Activated CD4-positive, alpha-beta T cell treated with anti-CD3 and anti-CD28 coated beads, Interleukin-2, amount 10 ng/mL, durations not matched to agents 24 days and 14 days (primary cell): ENCODE measurements at regions of chr10 and their contacts with region 1.

Region 1: DNA sequence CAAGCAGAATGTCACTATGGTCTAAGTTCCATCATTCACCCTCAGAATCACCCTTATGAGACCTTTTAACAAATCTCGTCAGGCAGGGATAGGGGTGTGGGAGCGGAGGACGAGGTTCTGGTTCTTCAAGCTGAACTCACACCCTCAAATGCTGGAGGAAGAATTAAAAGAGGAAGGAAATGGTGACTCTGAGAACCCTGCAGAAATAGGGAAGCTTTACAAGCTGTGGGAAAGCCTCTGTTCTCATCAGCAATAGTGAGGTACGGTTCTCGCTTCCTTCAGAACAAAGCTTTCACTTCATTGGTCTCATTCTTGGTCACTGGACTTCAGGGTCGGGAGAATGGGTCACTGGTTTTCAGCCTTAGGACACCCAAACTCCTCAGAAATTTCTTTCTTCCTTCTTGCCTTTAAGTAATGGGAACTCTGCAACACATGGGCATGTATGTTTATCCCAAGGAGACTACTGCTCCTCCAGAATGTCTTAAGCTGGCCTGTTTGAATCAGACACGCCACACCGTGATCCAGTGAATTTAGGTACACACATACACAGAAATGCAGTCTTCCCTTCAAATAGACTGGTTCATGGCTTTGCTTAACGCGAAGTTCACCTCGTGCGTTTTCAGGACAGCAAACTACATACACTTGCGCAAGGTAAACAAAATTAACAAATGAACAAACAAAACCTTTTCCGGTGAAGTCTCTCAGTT is 226.0 kb downstream of the SFMBT2 start:
- DNase-seq: no peak
- H3K4me3 Mint-ChIP-seq: peak overlapping the region; percentile 27
- H3K27ac Mint-ChIP-seq: peak overlapping the region; percentile 83
- H3K4me1 Mint-ChIP-seq: peaks cover 50% of the 10 kb centered on the region
- H3K27me3 Mint-ChIP-seq: no peaks in the 10 kb centered on the region

Region 2: GRCh38 chr10:7239312-7239985 is 54.6 kb after region 1 on chr10:
- intact Hi-C with region 1: loop called (anchors 2 kb)
- DNase-seq: peak; percentile 79
- H3K4me3 Mint-ChIP-seq: peak overlapping the region; percentile 14
- H3K27ac Mint-ChIP-seq: peak overlapping the region; percentile 46
- H3K4me1 Mint-ChIP-seq: peaks cover 50% of the 10 kb centered on the region
- H3K27me3 Mint-ChIP-seq: peaks cover 2% of the 10 kb centered on the region

Region 3: DNA sequence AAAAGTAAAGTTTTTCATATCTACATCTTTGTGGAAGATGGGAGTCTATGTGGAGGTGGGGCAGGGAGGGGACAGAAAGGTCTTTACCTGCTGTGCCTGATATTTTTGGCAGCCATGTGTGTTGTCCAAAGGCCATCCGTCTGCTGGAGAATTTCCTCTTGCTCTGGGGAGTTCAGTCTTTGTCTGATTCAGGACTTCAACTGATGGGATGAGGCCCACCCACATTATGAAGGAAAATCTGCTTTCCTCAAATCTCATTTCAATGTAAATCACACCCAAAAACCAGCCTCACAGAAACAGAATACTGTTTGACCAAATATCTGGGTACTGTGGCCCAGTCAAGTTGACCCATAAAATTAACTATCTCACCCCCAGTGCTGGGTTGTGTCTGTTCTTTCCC is 494.4 kb after region 1 on chr10:
- intact Hi-C with region 1: no loop called
- DNase-seq: no peak
- H3K4me3 Mint-ChIP-seq: no peak overlapping the region
- H3K27ac Mint-ChIP-seq: no peak overlapping the region
- H3K4me1 Mint-ChIP-seq: no peaks in the 10 kb centered on the region
- H3K27me3 Mint-ChIP-seq: peaks cover 22% of the 10 kb centered on the region